Kidney (tissue), 22 donors: ENCODE measurements at regions of chr2 and their contacts with region 1.

Region 1: GRCh38 chr2:130181325-130181879 is at the start of gene SMPD4:
- DNase-seq: peak; percentile 98 to 99 (median 99)
- H3K4me3 ChIP-seq: peak within 1 kb of the TSS; percentile 86 to 91 (median 88)
- H3K27ac ChIP-seq: peak within 1 kb of the TSS; percentile 65 to 82
- H3K4me1 ChIP-seq: peaks cover 0 to 12% (median 0%) of the 10 kb centered on the region in 3 donors
- H3K27me3 ChIP-seq: no peaks in the 10 kb centered on the region
- CTCF ChIP-seq: no peak
- total RNA-seq, gene SMPD4: 41.1 TPM

Region 2: DNA sequence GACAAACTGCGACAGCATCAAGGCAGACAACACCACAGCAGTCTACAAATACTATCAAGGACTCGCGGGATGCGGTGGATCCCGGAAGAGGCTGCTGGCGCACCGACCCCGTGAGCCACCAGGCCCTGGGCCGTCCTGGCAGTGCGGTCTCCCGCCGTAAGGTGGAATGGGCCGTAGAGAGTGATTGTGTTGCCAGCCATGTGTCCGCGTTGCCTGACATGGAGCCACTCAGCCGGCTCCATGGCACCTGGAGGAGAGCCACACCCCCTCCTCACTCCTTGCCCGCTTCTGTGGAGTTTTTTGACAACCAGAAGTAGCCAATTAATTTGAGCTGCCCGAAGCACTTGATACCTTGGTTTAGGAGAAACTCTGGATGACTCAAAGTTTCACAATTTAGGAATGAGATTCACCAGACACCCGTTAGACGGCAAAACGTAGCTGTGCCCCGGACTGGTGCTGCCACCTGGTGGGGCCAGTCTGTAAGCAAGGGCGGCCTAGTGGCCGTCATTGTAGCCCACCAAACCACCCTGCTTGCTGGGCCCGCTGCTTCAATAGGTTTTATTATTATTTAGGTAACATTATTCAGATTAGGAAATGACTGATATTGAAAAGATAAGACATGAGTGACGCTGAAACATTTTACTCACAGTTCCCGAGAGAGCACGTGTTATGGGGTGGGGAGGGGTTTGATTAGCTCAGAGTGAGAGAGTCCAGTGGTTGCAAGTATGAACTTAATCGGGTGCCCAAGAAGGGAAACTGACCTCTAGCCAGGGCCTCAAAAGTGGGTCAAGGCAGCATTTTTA is 151.1 kb after region 1 on chr2:
- intact Hi-C with region 1: loop called (anchors 10 kb)
- DNase-seq: peak; percentile 78 to 87 (median 84)
- H3K4me3 ChIP-seq: peak overlapping the region in 1 of 3 donors; percentile 31
- H3K27ac ChIP-seq: no peak overlapping the region
- H3K4me1 ChIP-seq: peaks cover 0 to 8% (median 0%) of the 10 kb centered on the region in 3 donors
- H3K27me3 ChIP-seq: no peaks in the 10 kb centered on the region
- CTCF ChIP-seq: peak; percentile 88

Region 3: GRCh38 chr2:131488306-131489205 is 1307.2 kb after region 1 on chr2:
- intact Hi-C with region 1: loop called (anchors 10 kb)
- DNase-seq: peak in 1 of 5 donors; percentile 82
- H3K4me3 ChIP-seq: no peak overlapping the region
- H3K27ac ChIP-seq: no peak overlapping the region
- H3K4me1 ChIP-seq: peaks cover 0 to 7% (median 0%) of the 10 kb centered on the region in 3 donors
- H3K27me3 ChIP-seq: no peaks in the 10 kb centered on the region
- CTCF ChIP-seq: no peak